ENCODE measurements at regions of chr7 and their contacts with region 1.

Region 1: DNA sequence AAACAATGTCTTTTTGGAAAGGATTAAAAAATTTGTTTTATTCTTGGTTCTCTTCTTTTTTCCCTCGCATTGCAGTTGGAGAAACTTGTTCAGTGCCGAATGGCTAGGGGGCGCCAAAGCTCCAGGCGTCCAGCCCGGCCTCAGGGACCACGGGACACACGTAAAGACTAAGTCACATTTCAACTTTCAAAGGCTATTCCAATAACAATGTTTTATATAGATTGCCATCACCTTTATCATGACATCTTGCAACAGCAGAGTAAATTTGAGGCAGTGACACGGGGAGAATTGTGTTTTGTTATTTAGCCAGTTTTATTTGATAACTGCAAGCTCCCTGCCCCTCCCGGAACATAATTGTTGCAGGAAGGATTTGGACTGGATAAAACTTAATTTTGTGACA is 2.2 kb upstream of the IGFBP3 start:
- DNase-seq: peak in 1 of 2 donors; percentile 82
- H3K4me3 ChIP-seq: peak overlapping the region; percentile 18 to 85
- H3K27ac ChIP-seq: peak overlapping the region in 1 of 2 donors; percentile 65
- H3K4me1 ChIP-seq: peaks cover 0 to 34% of the 10 kb centered on the region in 2 donors
- H3K27me3 ChIP-seq: no peaks in the 10 kb centered on the region
- CTCF ChIP-seq: peak; percentile 81 to 86 (median 83)

Region 2: GRCh38 chr7:45987521-45988290 is 64.4 kb after region 1 on chr7:
- intact Hi-C with region 1: no loop called
- DNase-seq: no peak
- H3K4me3 ChIP-seq: no peak overlapping the region
- H3K27ac ChIP-seq: peak overlapping the region in 1 of 2 donors; percentile 17
- H3K4me1 ChIP-seq: peaks cover 10 to 27% of the 10 kb centered on the region in 2 donors
- H3K27me3 ChIP-seq: no peaks in the 10 kb centered on the region
- CTCF ChIP-seq: no peak

Region 3: DNA sequence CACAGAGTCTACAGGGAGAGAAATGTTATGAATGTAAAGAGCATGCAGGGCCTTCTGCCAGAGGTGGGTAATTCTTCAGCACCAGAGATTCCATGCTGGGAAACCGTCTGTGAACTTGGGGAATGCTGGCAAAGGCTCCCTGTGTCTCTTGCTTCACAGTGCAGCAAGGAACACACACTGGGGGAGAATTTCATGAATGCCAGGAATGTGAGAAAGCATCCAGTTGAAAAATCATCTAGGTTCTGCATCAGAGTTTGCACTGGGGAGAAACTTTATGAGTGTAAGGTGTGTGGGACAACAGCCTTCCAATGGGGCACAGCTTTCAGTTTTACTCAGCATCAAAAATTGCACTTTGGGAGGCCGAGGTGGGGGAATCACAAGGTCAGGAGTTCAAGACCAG is 222.1 kb after region 1 on chr7:
- intact Hi-C with region 1: loop called (anchors 2 kb)
- DNase-seq: peak in 1 of 2 donors; percentile 75
- H3K4me3 ChIP-seq: no peak overlapping the region
- H3K27ac ChIP-seq: peak overlapping the region; percentile 8 to 9
- H3K4me1 ChIP-seq: peaks cover 9 to 19% of the 10 kb centered on the region in 2 donors
- H3K27me3 ChIP-seq: no peaks in the 10 kb centered on the region
- CTCF ChIP-seq: no peak

Region 4: GRCh38 chr7:46352004-46352954 is 429.0 kb after region 1 on chr7:
- intact Hi-C with region 1: loop called (anchors 1 kb)
- DNase-seq: no peak
- H3K4me3 ChIP-seq: no peak overlapping the region
- H3K27ac ChIP-seq: no peak overlapping the region
- H3K4me1 ChIP-seq: no peaks in the 10 kb centered on the region
- H3K27me3 ChIP-seq: no peaks in the 10 kb centered on the region
- CTCF ChIP-seq: peak; percentile 55 to 71 (median 55)

Region 5: GRCh38 chr7:46468753-46469356 is 545.6 kb after region 1 on chr7:
- intact Hi-C with region 1: no loop called
- DNase-seq: no peak
- H3K4me3 ChIP-seq: no peak overlapping the region
- H3K27ac ChIP-seq: no peak overlapping the region
- H3K4me1 ChIP-seq: no peaks in the 10 kb centered on the region
- H3K27me3 ChIP-seq: no peaks in the 10 kb centered on the region
- CTCF ChIP-seq: no peak

Region 6: DNA sequence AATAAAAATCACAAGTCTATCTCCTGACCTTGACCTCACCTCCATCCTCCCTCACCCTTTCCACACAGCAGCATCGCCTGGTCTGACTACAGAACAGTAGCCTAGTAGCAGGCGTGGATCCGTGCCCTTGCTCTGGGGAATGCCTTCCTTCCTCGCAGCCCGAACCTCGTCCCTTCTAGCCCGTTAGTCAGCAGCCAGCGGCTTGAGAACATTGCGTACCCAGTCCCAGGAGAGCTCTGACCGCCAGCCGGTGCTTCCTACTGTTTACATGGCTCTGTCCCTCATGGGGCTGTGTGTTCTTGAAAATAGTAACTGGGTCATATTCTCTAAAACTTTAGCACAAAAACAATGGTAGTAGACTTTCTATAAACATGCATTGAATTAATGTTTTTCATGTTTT is 680.5 kb after region 1 on chr7:
- intact Hi-C with region 1: loop called (anchors 5 kb)
- DNase-seq: peak; percentile 83 to 97
- H3K4me3 ChIP-seq: peak overlapping the region in 1 of 2 donors; percentile 33
- H3K27ac ChIP-seq: peak overlapping the region; percentile 78 to 79
- H3K4me1 ChIP-seq: peaks cover 8 to 10% of the 10 kb centered on the region in 2 donors
- H3K27me3 ChIP-seq: no peaks in the 10 kb centered on the region
- CTCF ChIP-seq: no peak

Region 7: GRCh38 chr7:47088329-47089067 is 1165.2 kb after region 1 on chr7:
- intact Hi-C with region 1: loop called (anchors 1 kb)
- DNase-seq: peak in 1 of 2 donors; percentile 74
- H3K4me3 ChIP-seq: no peak overlapping the region
- H3K27ac ChIP-seq: no peak overlapping the region
- H3K4me1 ChIP-seq: peaks cover 0 to 8% of the 10 kb centered on the region in 2 donors
- H3K27me3 ChIP-seq: no peaks in the 10 kb centered on the region
- CTCF ChIP-seq: peak; percentile 79 to 89 (median 82)